ENCODE measurements at regions of chr16 and their contacts with region 1.

Region 1: DNA sequence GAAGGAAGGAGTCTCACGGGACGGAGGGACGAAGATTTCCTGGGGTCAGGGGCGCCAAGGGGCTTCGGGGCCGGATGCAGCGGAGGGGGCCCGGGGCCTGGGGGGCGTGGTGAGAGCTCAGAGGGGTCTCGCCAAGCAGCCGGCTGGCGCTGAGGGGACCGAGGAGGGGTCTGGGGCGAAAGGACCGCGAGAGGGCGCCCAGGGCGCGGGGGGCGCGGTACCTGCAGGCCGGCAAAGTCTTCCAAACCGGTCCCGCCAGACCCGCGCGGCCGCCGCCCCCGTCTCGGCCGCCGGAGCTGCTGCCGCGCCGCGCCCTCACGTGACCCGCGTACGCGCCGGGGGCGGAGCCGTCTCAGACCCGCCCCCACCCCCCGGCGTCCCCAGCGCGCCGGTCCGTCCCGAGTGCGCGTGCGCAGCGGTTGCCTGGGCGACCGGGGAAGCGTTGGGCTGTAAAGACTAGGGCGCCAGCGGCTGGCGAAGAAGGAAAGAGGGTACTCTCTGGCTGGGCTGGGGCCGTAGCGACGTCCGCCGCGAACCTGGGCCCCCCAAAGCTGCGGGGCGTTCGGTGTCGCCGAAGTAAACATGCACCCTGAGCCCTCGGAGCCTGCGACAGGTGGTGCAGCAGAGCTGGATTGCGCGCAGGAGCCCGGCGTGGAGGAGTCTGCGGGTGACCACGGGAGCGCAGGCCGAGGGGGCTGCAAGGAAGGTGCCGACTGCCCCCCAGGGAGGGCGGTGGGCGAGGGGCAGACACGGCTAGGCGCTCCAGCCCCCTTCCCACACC is at the starts of genes DNAAF1 and HSDL1:
- DNase-seq: peak; percentile 90 to 95
- ATAC-seq: peak; percentile 91 to 97 (median 96)
- H3K4me3 ChIP-seq: peak within 1 kb of the TSS; percentile 71 to 99 (median 90)
- H3K27ac ChIP-seq: peak within 1 kb of the TSS in 9 of 10 donors; percentile 65 to 90 (median 81)
- H3K4me1 ChIP-seq: peaks cover 0 to 19% (median 10%) of the 10 kb centered on the region in 9 donors
- H3K27me3 ChIP-seq: peaks cover 0 to 5% (median 0%) of the 10 kb centered on the region in 7 donors
- CTCF ChIP-seq: peak in 5 of 9 donors; percentile 6 to 36 (median 21)
- total RNA-seq, gene DNAAF1: 0.23 to 0.54 (median 0.28) TPM in 3 of 10 donors, not detected in the others
- total RNA-seq, gene HSDL1: 19.4 to 38.5 (median 25.3) TPM

Region 2: GRCh38 chr16:83933885-83934683 is 211.0 kb before region 1 on chr16:
- intact Hi-C with region 1: no loop called
- DNase-seq: no peak
- ATAC-seq: no peak
- H3K4me3 ChIP-seq: no peak overlapping the region
- H3K27ac ChIP-seq: no peak overlapping the region
- H3K4me1 ChIP-seq: peaks cover 0 to 19% (median 9%) of the 10 kb centered on the region in 9 donors
- H3K27me3 ChIP-seq: no peaks in the 10 kb centered on the region
- CTCF ChIP-seq: no peak

Region 3: GRCh38 chr16:84072014-84072413 is 73.0 kb before region 1 on chr16:
- intact Hi-C with region 1: loop called in 1 of 10 experiments (anchors 10 kb)
- DNase-seq: no peak
- ATAC-seq: no peak
- H3K4me3 ChIP-seq: no peak overlapping the region
- H3K27ac ChIP-seq: peak overlapping the region in 1 of 10 donors; percentile 15
- H3K4me1 ChIP-seq: peaks cover 0 to 22% (median 10%) of the 10 kb centered on the region in 9 donors
- H3K27me3 ChIP-seq: no peaks in the 10 kb centered on the region
- CTCF ChIP-seq: no peak

Region 4: DNA sequence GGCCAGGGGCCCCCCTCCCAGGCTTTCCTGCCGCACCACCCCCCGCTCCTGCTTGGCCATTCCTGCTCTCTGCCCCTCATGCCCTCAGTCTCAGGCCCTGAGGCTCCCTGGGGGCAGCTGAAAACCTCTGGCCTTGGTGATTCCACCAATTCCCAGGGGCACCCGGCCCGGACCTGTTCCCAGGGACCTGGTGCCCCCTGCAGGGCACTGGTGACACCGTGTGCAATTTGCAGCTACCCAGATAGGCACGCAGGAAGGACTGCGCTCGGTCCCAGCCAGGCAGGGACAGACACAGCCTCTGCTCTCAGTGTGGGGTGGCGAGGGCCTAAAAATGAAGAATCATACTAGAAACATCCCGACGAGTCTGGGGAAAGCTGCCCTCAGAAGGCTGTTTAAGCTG is 163.1 kb after region 1 on chr16:
- intact Hi-C with region 1: no loop called
- DNase-seq: peak; percentile 34 to 57
- ATAC-seq: peak; percentile 58 to 84 (median 75)
- H3K4me3 ChIP-seq: no peak overlapping the region
- H3K27ac ChIP-seq: no peak overlapping the region
- H3K4me1 ChIP-seq: peaks cover 0 to 11% (median 5%) of the 10 kb centered on the region in 9 donors
- H3K27me3 ChIP-seq: peaks cover 0 to 59% (median 27%) of the 10 kb centered on the region in 7 donors
- CTCF ChIP-seq: peak; percentile 27 to 65 (median 51)

Measured in heart right ventricle (tissue), 16 donors.